ENCODE measurements at regions of chr4 and their contacts with region 1.

Region 1: GRCh38 chr4:99389606-99390005 is 37.1 kb upstream of the ADH1C start:
- DNase-seq: no peak
- H3K4me3 ChIP-seq: no peak overlapping the region
- H3K27ac ChIP-seq: no peak overlapping the region
- H3K4me1 ChIP-seq: peaks cover 8% of the 10 kb centered on the region
- H3K27me3 ChIP-seq: no peaks in the 10 kb centered on the region
- CTCF ChIP-seq: no peak
- POLR2A ChIP-seq: no peak

Region 2: GRCh38 chr4:99943904-99944437 is 554.4 kb after region 1 on chr4:
- intact Hi-C with region 1: loop called (anchors 5 kb)
- DNase-seq: no peak
- H3K4me3 ChIP-seq: no peak overlapping the region
- H3K27ac ChIP-seq: no peak overlapping the region
- H3K4me1 ChIP-seq: peaks cover 62% of the 10 kb centered on the region
- H3K27me3 ChIP-seq: no peaks in the 10 kb centered on the region
- CTCF ChIP-seq: no peak
- POLR2A ChIP-seq: no peak